ENCODE measurements at regions of chr17 and their contacts with region 1.

Region 1: DNA sequence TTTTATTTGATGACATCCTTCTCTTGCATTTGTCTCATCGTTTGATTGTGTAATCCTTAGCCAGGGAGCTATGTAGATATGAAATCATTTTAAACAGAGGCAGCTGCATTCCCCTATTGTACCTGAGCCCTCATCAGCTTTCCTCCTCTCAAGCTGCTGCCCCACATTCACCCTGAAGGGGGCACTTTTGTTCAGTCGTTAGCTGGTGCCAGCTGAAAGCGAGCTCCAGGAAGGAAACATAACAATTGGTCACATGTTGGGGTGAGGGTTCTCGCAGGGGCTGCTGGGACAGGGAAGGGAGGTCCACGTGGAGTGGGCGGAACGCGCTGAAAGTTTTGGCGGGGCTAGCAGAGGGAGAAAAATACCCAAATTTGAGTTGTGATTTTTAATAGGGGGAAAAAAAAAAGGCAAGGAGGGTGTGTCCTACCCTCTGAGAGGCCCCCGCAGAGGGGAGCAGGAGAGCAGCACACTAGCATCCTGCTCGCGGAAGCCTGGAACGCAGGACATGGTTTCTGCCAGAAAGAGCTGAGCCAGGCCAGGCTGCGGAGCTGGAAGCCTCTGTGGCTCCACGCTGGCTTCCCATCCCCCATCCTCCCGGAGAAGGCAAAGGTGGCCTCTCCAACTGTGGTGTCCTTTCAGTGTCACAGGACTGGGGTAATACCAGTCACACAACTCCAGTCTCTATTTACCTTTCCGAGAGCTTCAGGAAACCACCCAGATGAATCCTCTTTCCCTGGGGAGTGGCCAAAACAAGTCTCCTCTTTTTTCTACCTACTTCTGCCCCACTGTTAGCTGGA is 8.5 kb upstream of the MSL1 start:
- DNase-seq: peak; percentile 77
- H3K4me3 ChIP-seq: peak overlapping the region; percentile 51
- CTCF ChIP-seq: peak; percentile 87

Region 2: GRCh38 chr17:40026816-40027613 is 86.3 kb before region 1 on chr17:
- CTCF ChIA-PET with region 1: interaction called, 47 read pairs
- POLR2A ChIA-PET with region 1: no interaction called
- DNase-seq: no peak
- H3K4me3 ChIP-seq: no peak overlapping the region
- CTCF ChIP-seq: peak; percentile 95

Region 3: DNA sequence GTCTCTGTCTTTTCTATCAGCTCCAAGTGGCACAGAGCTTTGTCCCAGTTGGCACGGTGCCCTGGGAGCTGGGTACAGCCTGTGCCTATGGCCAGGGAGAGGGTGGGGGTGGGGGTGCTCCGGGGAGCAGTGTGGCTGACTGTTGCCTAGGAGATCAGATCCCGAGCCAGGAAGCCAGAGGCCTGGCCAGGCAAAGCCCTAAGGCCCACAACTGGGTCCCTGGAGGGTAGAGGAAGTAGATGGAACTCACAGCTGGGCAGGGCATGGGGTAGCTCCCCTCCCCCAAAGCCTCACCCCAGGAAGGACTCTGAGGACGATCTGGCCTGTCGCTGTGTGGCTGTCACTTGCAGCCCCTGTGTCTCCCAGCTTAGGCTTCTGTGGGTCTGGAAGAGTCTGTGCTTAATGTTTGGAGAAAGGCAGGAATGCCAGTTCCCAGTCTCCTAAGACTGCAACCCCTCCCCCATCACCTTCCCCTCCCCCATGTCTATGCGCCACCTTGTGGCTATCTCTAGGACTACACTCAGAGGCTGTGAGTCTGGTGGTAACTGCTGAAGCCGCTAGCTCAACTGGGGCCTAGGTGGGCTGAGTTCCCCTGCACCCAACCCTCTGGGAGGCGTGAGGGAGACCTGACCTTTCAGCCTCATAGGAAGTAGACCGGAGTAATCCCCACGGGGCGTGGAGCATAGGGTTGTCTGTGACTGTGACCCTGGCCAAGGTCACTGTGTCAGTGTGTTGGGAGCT is 37.9 kb before region 1 on chr17:
- CTCF ChIA-PET with region 1: interaction called, 10 read pairs
- POLR2A ChIA-PET with region 1: no interaction called
- DNase-seq: no peak
- H3K4me3 ChIP-seq: no peak overlapping the region
- CTCF ChIP-seq: peak; percentile 89

Region 4: GRCh38 chr17:40139566-40140058 is 26.3 kb after region 1 on chr17:
- CTCF ChIA-PET with region 1: interaction called, 26 read pairs
- POLR2A ChIA-PET with region 1: interaction called, 18 read pairs
- DNase-seq: no peak
- H3K4me3 ChIP-seq: peak overlapping the region; percentile 57
- CTCF ChIP-seq: no peak

Region 5: GRCh38 chr17:40177275-40177874 is 64.1 kb after region 1 on chr17 and contains the start of gene RAPGEFL1:
- CTCF ChIA-PET with region 1: interaction called, 25 read pairs
- POLR2A ChIA-PET with region 1: interaction called, 4 read pairs
- DNase-seq: no peak
- H3K4me3 ChIP-seq: peak within 1 kb of the TSS; percentile 55
- CTCF ChIP-seq: no peak

Region 6: GRCh38 chr17:40287494-40288369 is 174.4 kb after region 1 on chr17 and contains the start of gene CDC6:
- CTCF ChIA-PET with region 1: interaction called, 35 read pairs
- POLR2A ChIA-PET with region 1: no interaction called
- DNase-seq: peak; percentile 91
- H3K4me3 ChIP-seq: peak within 1 kb of the TSS; percentile 75
- CTCF ChIP-seq: no peak